ENCODE measurements at regions of chr10 and their contacts with region 1.

Region 1: GRCh38 chr10:112140110-112140970 is 43.2 kb downstream of the GPAM start:
- DNase-seq: peak; percentile 59
- ATAC-seq: peak; percentile 96
- H3K4me3 ChIP-seq: no peak overlapping the region
- H3K27ac ChIP-seq: no peak overlapping the region
- H3K4me1 ChIP-seq: no peaks in the 10 kb centered on the region
- H3K27me3 ChIP-seq: no peaks in the 10 kb centered on the region; the same call in 1 of the 2 replicates
- CTCF ChIP-seq: peak; percentile 83
- POLR2A ChIP-seq: no peak
- RAD21 ChIP-seq: peak; percentile 69

Region 2: DNA sequence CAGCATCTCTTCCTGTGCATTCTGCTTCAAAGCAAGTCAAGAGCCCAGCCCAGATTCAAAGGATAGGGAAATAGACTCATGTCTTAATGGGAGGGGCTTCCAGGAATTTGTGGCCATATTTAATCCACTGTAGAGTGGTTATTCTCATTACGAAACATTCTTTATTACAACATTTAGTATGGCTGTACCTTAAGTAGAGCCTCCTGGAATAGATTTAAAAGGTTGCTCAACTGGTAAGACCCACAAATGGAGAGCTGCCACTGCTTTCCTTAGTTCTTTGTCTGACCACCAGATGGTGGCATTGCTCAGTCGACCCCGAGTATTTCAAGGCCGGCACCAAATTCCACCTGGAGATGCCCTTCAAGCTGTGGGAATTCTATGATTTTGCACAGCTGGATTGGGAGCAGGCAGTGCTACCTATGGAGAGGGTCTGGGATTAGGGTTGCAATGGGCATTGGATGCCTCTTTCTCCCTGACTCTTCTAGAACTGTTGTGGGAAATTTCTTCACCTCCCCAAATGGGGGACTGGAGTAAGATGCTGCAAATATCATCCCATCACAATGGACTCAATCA is 1394.0 kb before region 1 on chr10:
- CTCF ChIA-PET with region 1: no interaction called
- POLR2A ChIA-PET with region 1: no interaction called
- dilution Hi-C with region 1: no loop called
- in situ Hi-C with region 1: loop called (anchors 10 kb)
- intact Hi-C with region 1: loop called (anchors 5 kb)
- DNase-seq: peak; percentile 71
- ATAC-seq: peak; percentile 90
- H3K4me3 ChIP-seq: no peak overlapping the region
- H3K27ac ChIP-seq: no peak overlapping the region
- H3K4me1 ChIP-seq: no peaks in the 10 kb centered on the region; the same call in 1 of the 2 replicates
- H3K27me3 ChIP-seq: peaks cover 5% of the 10 kb centered on the region
- CTCF ChIP-seq: peak; percentile 81
- POLR2A ChIP-seq: 0 out of 2 replicates have a peak, but pooled peaks have one; percentile 30
- RAD21 ChIP-seq: peak; percentile 90

Region 3: DNA sequence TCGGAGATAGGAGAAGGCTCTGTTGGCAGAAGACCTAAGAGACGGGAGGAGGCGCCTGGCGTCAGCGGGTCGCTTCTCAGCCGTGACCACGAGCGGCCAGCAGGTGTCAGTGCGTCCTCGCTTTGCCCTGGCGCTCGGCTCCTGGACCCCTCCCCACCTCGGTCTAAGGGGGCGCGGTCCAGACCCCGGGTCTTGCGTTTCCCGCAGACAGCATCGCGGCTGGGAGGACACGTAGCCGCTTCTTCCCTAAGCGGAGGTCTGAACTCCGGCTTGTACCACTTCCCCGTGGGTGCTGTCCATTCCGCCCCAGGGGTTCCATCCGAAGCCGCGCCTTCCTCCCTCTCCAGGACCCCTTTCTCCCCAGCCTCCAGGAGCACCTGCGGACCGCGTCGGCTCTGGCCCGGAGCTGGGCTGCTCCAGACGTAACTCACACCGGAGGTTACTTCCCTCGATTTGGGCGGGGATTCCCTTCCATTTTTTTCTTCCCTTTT is 1064.1 kb before region 1 on chr10:
- CTCF ChIA-PET with region 1: interaction called, 10 read pairs
- POLR2A ChIA-PET with region 1: no interaction called
- dilution Hi-C with region 1: no loop called
- in situ Hi-C with region 1: no loop called
- intact Hi-C with region 1: loop called (anchors 2 kb)
- DNase-seq: peak; percentile 27
- ATAC-seq: peak; percentile 87
- H3K4me3 ChIP-seq: peak overlapping the region; percentile 28
- H3K27ac ChIP-seq: no peak overlapping the region
- H3K4me1 ChIP-seq: no peaks in the 10 kb centered on the region; the same call in 1 of the 2 replicates
- H3K27me3 ChIP-seq: peaks cover 68% of the 10 kb centered on the region
- CTCF ChIP-seq: peak; percentile 61
- POLR2A ChIP-seq: no peak
- RAD21 ChIP-seq: peak; percentile 55

Region 4: GRCh38 chr10:112092502-112092901 is 47.8 kb before region 1 on chr10:
- CTCF ChIA-PET with region 1: no interaction called
- POLR2A ChIA-PET with region 1: no interaction called
- dilution Hi-C with region 1: no loop called
- in situ Hi-C with region 1: no loop called
- intact Hi-C with region 1: no loop called
- DNase-seq: no peak
- ATAC-seq: no peak
- H3K4me3 ChIP-seq: no peak overlapping the region
- H3K27ac ChIP-seq: no peak overlapping the region
- H3K4me1 ChIP-seq: no peaks in the 10 kb centered on the region
- H3K27me3 ChIP-seq: no peaks in the 10 kb centered on the region
- CTCF ChIP-seq: no peak
- POLR2A ChIP-seq: no peak
- RAD21 ChIP-seq: no peak

Region 5: DNA sequence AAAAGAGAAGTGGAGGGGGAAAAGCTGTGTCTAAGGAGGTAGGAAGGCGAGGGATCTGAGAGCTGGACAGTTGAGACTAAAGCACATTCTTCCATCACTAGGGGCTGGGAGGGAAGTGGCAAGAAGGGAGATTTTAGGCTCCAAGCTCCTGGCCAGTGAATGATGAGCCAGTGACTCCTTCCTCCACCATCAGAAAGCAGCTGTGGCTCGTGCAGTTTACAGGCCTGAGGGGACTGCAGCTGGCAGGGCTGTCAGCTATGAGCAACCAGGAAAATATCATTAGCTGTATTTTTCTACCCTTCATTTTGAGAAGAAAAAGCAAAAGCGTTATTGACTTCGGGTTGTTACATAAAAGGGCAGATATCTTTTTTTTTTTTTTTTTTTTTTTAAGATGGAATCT is 17.5 kb before region 1 on chr10:
- CTCF ChIA-PET with region 1: interaction called, 17 read pairs
- POLR2A ChIA-PET with region 1: no interaction called
- dilution Hi-C with region 1: no loop called
- in situ Hi-C with region 1: no loop called
- intact Hi-C with region 1: no loop called
- DNase-seq: no peak
- ATAC-seq: no peak
- H3K4me3 ChIP-seq: no peak overlapping the region
- H3K27ac ChIP-seq: no peak overlapping the region
- H3K4me1 ChIP-seq: no peaks in the 10 kb centered on the region
- H3K27me3 ChIP-seq: peaks cover 3% of the 10 kb centered on the region; the same call in 1 of the 2 replicates
- CTCF ChIP-seq: no peak
- POLR2A ChIP-seq: no peak
- RAD21 ChIP-seq: no peak

Region 6: GRCh38 chr10:112404616-112405015 is 264.3 kb after region 1 on chr10:
- CTCF ChIA-PET with region 1: no interaction called
- POLR2A ChIA-PET with region 1: no interaction called
- dilution Hi-C with region 1: no loop called
- in situ Hi-C with region 1: no loop called
- intact Hi-C with region 1: no loop called
- DNase-seq: peak; percentile 10
- ATAC-seq: peak; percentile 35
- H3K4me3 ChIP-seq: no peak overlapping the region
- H3K27ac ChIP-seq: no peak overlapping the region
- H3K4me1 ChIP-seq: peaks cover 2% of the 10 kb centered on the region; the same call in 1 of the 2 replicates
- H3K27me3 ChIP-seq: 0 out of 2 replicates have a peak, but pooled peaks cover 1% of the 10 kb centered on the region
- CTCF ChIP-seq: no peak
- POLR2A ChIP-seq: no peak
- RAD21 ChIP-seq: no peak